GM12878 (cell line): ENCODE measurements at regions of chr11 and their contacts with region 1.

Region 1: GRCh38 chr11:133269267-133269666 is 263.0 kb downstream of the OPCML start:
- DNase-seq: peak; percentile 92
- ATAC-seq: peak; percentile 98
- H3K4me3 ChIP-seq: no peak overlapping the region
- H3K27ac ChIP-seq: peak overlapping the region; percentile 79
- H3K4me1 ChIP-seq: peaks cover 11% of the 10 kb centered on the region; the same call in 1 of the 2 replicates
- H3K27me3 ChIP-seq: no peaks in the 10 kb centered on the region
- CTCF ChIP-seq: no peak
- EP300 ChIP-seq: peak; percentile 93 to 94
- POLR2A ChIP-seq: no peak
- RAD21 ChIP-seq: no peak

Region 2: GRCh38 chr11:133166662-133167061 is 102.6 kb before region 1 on chr11:
- CTCF ChIA-PET with region 1: no interaction called
- POLR2A ChIA-PET with region 1: no interaction called
- RAD21 ChIA-PET with region 1: no interaction called
- SMC1A ChIA-PET with region 1: no interaction called
- in situ Hi-C with region 1: no loop called
- intact Hi-C with region 1: no loop called
- DNase-seq: no peak
- ATAC-seq: no peak
- H3K4me3 ChIP-seq: no peak overlapping the region
- H3K27ac ChIP-seq: no peak overlapping the region
- H3K4me1 ChIP-seq: no peaks in the 10 kb centered on the region
- H3K27me3 ChIP-seq: no peaks in the 10 kb centered on the region
- CTCF ChIP-seq: no peak
- EP300 ChIP-seq: no peak
- POLR2A ChIP-seq: no peak
- RAD21 ChIP-seq: no peak

Region 3: GRCh38 chr11:133360860-133361688 is 91.8 kb after region 1 on chr11:
- CTCF ChIA-PET with region 1: no interaction called
- POLR2A ChIA-PET with region 1: no interaction called
- RAD21 ChIA-PET with region 1: no interaction called
- SMC1A ChIA-PET with region 1: no interaction called
- in situ Hi-C with region 1: no loop called
- intact Hi-C with region 1: loop called (anchors 10 kb)
- DNase-seq: peak; percentile 19
- ATAC-seq: peak; percentile 85
- H3K4me3 ChIP-seq: no peak overlapping the region
- H3K27ac ChIP-seq: no peak overlapping the region
- H3K4me1 ChIP-seq: no peaks in the 10 kb centered on the region
- H3K27me3 ChIP-seq: no peaks in the 10 kb centered on the region
- CTCF ChIP-seq: no peak
- EP300 ChIP-seq: no peak
- POLR2A ChIP-seq: no peak
- RAD21 ChIP-seq: no peak

Region 4: GRCh38 chr11:133414506-133414905 is 145.2 kb after region 1 on chr11:
- CTCF ChIA-PET with region 1: no interaction called
- POLR2A ChIA-PET with region 1: no interaction called
- RAD21 ChIA-PET with region 1: interaction called, 4 read pairs
- SMC1A ChIA-PET with region 1: no interaction called
- in situ Hi-C with region 1: no loop called
- intact Hi-C with region 1: loop called (anchors 5 kb)
- DNase-seq: no peak
- ATAC-seq: no peak
- H3K4me3 ChIP-seq: no peak overlapping the region
- H3K27ac ChIP-seq: no peak overlapping the region; the same call in 1 of the 2 replicates
- H3K4me1 ChIP-seq: peaks cover 13% of the 10 kb centered on the region
- H3K27me3 ChIP-seq: no peaks in the 10 kb centered on the region
- CTCF ChIP-seq: no peak
- EP300 ChIP-seq: no peak
- POLR2A ChIP-seq: no peak
- RAD21 ChIP-seq: no peak